Activated T-helper 1 cell treated with anti-CD3 and anti-CD28 coated beads, Interleukin-12 subunit alpha, Interleukin-12 subunit beta, Interleukin-2, Interleukin-4 antibody, amounts not matched to agents 30 ng/mL and 10 ng/mL and 1 ng/mL, durations not matched to agents 14 hours and 24 hours and 36 hours (primary cell): ENCODE measurements at regions of chr11 and their contacts with region 1.

Region 1: GRCh38 chr11:798093-798713 is at the start of gene SLC25A22:
- DNase-seq: peak; percentile 84
- H3K4me3 Mint-ChIP-seq: peak within 1 kb of the TSS; percentile 93
- H3K27ac Mint-ChIP-seq: peak within 1 kb of the TSS; percentile 82
- H3K4me1 Mint-ChIP-seq: peaks cover 4% of the 10 kb centered on the region
- H3K27me3 Mint-ChIP-seq: no peaks in the 10 kb centered on the region
- total RNA-seq, gene SLC25A22: 87.6 and 92.0 TPM in 2 replicates

Region 2: GRCh38 chr11:568306-569157 is 229.7 kb before region 1 on chr11:
- intact Hi-C with region 1: loop called (anchors 2 kb)
- DNase-seq: peak; percentile 97
- H3K4me3 Mint-ChIP-seq: peak overlapping the region; percentile 79
- H3K27ac Mint-ChIP-seq: no peak overlapping the region
- H3K4me1 Mint-ChIP-seq: peaks cover 15% of the 10 kb centered on the region
- H3K27me3 Mint-ChIP-seq: peaks cover 2% of the 10 kb centered on the region

Region 3: GRCh38 chr11:615504-616319 is 182.5 kb before region 1 on chr11 and contains the start of gene IRF7:
- intact Hi-C with region 1: loop called (anchors 5 kb)
- DNase-seq: peak; percentile 88
- H3K4me3 Mint-ChIP-seq: peak within 1 kb of the TSS; percentile 86
- H3K27ac Mint-ChIP-seq: peak within 1 kb of the TSS; percentile 85
- H3K4me1 Mint-ChIP-seq: peaks cover 7% of the 10 kb centered on the region
- H3K27me3 Mint-ChIP-seq: no peaks in the 10 kb centered on the region
- total RNA-seq, gene IRF7: 56.6 and 63.1 TPM in 2 replicates

Region 4: GRCh38 chr11:747158-748006 is 50.8 kb before region 1 on chr11 and contains the start of gene TALDO1:
- intact Hi-C with region 1: loop called (anchors 1 kb)
- DNase-seq: peak; percentile 88
- H3K4me3 Mint-ChIP-seq: peak within 1 kb of the TSS; percentile 91
- H3K27ac Mint-ChIP-seq: peak within 1 kb of the TSS; percentile 90
- H3K4me1 Mint-ChIP-seq: peaks cover 25% of the 10 kb centered on the region
- H3K27me3 Mint-ChIP-seq: no peaks in the 10 kb centered on the region
- total RNA-seq, gene TALDO1: 269 and 283 TPM in 2 replicates

Region 5: DNA sequence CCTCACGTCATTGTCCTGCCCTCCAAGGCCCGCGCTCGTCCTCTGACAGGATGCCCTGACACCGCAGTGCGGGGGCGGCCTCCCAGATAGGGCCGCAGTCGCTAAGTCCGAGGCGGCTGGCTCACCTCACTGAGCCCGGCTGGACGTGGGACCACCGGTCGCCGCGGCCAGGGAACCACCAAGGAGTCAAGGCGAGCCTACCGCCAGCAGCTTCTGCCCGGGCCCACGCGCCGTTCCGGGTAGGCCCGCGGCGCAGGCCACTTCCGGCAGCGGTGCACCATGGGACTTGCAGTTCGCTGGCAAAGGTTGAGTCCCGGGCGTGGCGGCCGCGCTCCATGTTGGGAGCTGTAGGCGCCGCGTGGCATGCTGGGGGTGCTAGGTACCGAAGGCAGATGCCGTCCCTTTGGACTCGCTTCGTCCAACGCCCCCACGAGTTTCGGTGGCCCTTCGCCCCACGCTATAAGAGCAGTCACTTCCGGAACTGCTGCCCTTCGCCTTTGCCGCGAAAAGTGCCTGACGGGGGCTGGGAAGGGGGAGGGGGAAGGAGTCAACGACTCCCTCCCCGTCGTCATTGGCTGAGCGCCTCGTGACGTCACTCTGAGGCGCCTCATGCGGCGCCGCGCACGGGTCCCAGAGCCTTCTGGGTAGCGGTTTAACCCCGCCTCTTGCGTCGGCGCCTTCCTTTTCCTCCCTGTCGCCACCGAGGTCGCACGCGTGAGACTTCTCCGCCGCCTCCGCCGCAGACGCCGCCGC is 11.3 kb after region 1 on chr11 and contains the start of gene RPLP2:
- intact Hi-C with region 1: loop called (anchors 1 kb)
- DNase-seq: peak; percentile 97
- H3K4me3 Mint-ChIP-seq: peak within 1 kb of the TSS; percentile 92
- H3K27ac Mint-ChIP-seq: peak within 1 kb of the TSS; percentile 90
- H3K4me1 Mint-ChIP-seq: peaks cover 28% of the 10 kb centered on the region
- H3K27me3 Mint-ChIP-seq: no peaks in the 10 kb centered on the region
- total RNA-seq, gene RPLP2: 2,072 and 2,148 TPM in 2 replicates

Region 6: DNA sequence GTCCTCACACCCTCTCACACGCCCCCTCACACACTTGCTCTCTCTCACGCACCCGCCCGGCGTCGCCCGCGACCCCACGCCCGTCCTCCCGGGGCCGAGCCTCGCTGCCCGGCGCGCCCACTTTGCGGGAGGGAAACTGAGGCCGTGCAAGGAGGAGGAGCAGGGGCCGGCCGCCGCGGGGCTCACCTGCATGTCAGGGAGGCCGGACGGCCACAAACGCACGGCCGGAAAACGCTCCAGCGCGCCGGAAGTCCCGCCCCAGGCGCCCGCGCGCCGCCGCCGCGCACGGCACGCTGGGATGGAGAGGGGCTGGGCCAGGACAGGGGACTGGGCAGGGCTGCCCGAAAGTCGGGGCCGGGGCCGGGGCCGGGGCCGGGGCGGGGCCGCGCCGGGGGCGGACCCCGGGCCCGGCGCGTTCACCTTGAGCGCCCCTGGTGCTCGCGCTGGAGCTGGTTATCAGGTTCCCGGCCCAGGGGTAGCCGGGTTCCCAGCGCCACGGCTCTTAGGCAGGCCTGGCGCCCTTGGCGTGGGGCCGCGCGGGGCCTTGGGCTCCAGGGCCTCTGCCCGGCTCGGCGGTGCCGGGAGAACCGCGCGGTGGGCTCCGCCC is 112.5 kb after region 1 on chr11 and contains the start of gene CHID1:
- intact Hi-C with region 1: loop called (anchors 2 kb)
- DNase-seq: peak; percentile 89
- H3K4me3 Mint-ChIP-seq: peak within 1 kb of the TSS; percentile 96
- H3K27ac Mint-ChIP-seq: peak within 1 kb of the TSS; percentile 93
- H3K4me1 Mint-ChIP-seq: peaks cover 18% of the 10 kb centered on the region
- H3K27me3 Mint-ChIP-seq: no peaks in the 10 kb centered on the region
- total RNA-seq, gene CHID1: 108 and 110 TPM in 2 replicates

Region 7: GRCh38 chr11:986294-986959 is 188.2 kb after region 1 on chr11:
- intact Hi-C with region 1: no loop called
- DNase-seq: no peak
- H3K4me3 Mint-ChIP-seq: no peak overlapping the region
- H3K27ac Mint-ChIP-seq: no peak overlapping the region
- H3K4me1 Mint-ChIP-seq: no peaks in the 10 kb centered on the region
- H3K27me3 Mint-ChIP-seq: no peaks in the 10 kb centered on the region